ENCODE measurements at regions of chr3 and their contacts with region 1.

Region 1: GRCh38 chr3:159828542-159828943 is 160.1 kb upstream of the IL12A start:
- DNase-seq: peak; percentile 80
- H3K4me3 ChIP-seq: no peak overlapping the region
- H3K27ac ChIP-seq: peak overlapping the region; percentile 32
- H3K4me1 ChIP-seq: peaks cover 32% of the 10 kb centered on the region
- H3K27me3 ChIP-seq: no peaks in the 10 kb centered on the region
- CTCF ChIP-seq: peak; percentile 28 to 42
- POLR2A ChIP-seq: no peak

Region 2: GRCh38 chr3:159813822-159814523 is 14.6 kb before region 1 on chr3:
- CTCF ChIA-PET with region 1: interaction called, 10 read pairs
- POLR2A ChIA-PET with region 1: no interaction called
- dilution Hi-C with region 1: no loop called
- intact Hi-C with region 1: no loop called
- DNase-seq: no peak
- H3K4me3 ChIP-seq: no peak overlapping the region
- H3K27ac ChIP-seq: no peak overlapping the region
- H3K4me1 ChIP-seq: peaks cover 9% of the 10 kb centered on the region
- H3K27me3 ChIP-seq: no peaks in the 10 kb centered on the region
- CTCF ChIP-seq: no peak
- POLR2A ChIP-seq: no peak

Region 3: DNA sequence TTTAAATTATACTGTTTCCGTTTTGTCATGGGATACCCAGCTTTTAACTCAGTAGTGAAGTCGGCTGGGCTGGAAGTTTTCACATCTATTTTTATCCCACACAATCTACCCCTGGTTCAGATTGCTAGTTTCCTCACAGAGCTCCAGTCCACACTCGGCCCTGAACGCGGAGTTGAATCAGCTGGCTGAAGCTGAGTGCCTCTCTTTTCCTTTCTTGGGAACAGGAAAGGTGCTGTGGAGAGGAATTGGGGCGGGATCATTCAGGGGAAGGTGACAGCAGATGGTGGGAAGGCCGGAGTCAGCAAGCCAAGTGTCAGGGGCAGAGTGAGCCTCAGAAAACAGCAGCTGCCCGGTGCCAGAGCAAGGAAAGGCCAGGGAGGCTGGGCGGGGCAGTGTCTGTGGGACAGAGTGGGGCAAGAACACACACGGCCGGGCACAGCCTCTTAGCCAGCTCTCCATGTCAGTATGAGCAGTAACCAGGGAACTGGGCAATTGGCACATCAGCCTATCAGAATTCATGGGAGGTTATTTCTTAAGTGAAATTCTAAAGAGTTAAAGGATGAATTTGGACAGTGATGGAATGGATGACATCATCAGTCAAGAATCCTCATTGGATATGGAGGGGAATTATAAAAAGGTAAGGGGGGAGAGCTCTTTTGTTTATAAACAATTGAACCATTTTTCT is 24.4 kb after region 1 on chr3:
- CTCF ChIA-PET with region 1: interaction called, 145 read pairs
- POLR2A ChIA-PET with region 1: interaction called, 45 read pairs
- dilution Hi-C with region 1: no loop called
- intact Hi-C with region 1: loop called (anchors 1 kb)
- DNase-seq: peak; percentile 97
- H3K4me3 ChIP-seq: peak overlapping the region in 2 of 3 experiments; percentile 45 to 52
- H3K27ac ChIP-seq: peak overlapping the region; percentile 97
- H3K4me1 ChIP-seq: peaks cover 70% of the 10 kb centered on the region
- H3K27me3 ChIP-seq: no peaks in the 10 kb centered on the region
- CTCF ChIP-seq: no peak
- POLR2A ChIP-seq: peak; percentile 2

Region 4: GRCh38 chr3:159872374-159873109 is 44.0 kb after region 1 on chr3:
- CTCF ChIA-PET with region 1: interaction called, 32 read pairs
- POLR2A ChIA-PET with region 1: no interaction called
- dilution Hi-C with region 1: no loop called
- intact Hi-C with region 1: no loop called
- DNase-seq: peak; percentile 85
- H3K4me3 ChIP-seq: no peak overlapping the region
- H3K27ac ChIP-seq: peak overlapping the region; percentile 92
- H3K4me1 ChIP-seq: peaks cover 19% of the 10 kb centered on the region
- H3K27me3 ChIP-seq: no peaks in the 10 kb centered on the region
- CTCF ChIP-seq: peak; percentile 12 to 25
- POLR2A ChIP-seq: no peak

Region 5: GRCh38 chr3:159950156-159950898 is 121.8 kb after region 1 on chr3:
- CTCF ChIA-PET with region 1: no interaction called
- POLR2A ChIA-PET with region 1: no interaction called
- dilution Hi-C with region 1: no loop called
- intact Hi-C with region 1: no loop called
- DNase-seq: no peak
- H3K4me3 ChIP-seq: no peak overlapping the region
- H3K27ac ChIP-seq: no peak overlapping the region
- H3K4me1 ChIP-seq: no peaks in the 10 kb centered on the region
- H3K27me3 ChIP-seq: no peaks in the 10 kb centered on the region
- CTCF ChIP-seq: no peak
- POLR2A ChIP-seq: no peak

Region 6: DNA sequence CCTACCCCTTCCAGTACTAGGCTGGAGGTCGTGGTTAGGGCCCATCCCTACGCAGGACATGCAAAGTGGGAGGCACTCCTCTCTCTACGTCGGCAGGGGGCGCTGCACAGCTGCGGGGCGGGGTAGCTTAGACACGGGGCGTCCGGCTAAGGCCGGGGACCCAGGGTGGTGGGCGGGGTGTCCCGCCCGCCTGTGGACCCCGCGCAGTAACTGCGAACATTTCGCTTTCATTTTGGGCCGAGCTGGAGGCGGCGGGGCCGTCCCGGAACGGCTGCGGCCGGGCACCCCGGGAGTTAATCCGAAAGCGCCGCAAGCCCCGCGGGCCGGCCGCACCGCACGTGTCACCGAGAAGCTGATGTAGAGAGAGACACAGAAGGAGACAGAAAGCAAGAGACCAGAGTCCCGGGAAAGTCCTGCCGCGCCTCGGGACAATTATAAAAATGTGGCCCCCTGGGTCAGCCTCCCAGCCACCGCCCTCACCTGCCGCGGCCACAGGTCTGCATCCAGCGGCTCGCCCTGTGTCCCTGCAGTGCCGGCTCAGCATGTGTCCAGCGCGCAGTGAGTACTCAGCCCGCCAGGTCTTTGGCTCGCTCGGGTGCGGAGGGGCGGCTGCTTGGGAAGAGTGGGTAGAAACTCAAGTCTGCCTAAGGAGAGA is 160.2 kb after region 1 on chr3 and contains the start of gene IL12A:
- CTCF ChIA-PET with region 1: interaction called, 37 read pairs
- POLR2A ChIA-PET with region 1: no interaction called
- dilution Hi-C with region 1: no loop called
- intact Hi-C with region 1: loop called (anchors 5 kb)
- DNase-seq: peak; percentile 75
- H3K4me3 ChIP-seq: peak within 1 kb of the TSS; percentile 58 to 71 (median 60)
- H3K27ac ChIP-seq: no peak within 1 kb of the TSS
- H3K4me1 ChIP-seq: peaks cover 4% of the 10 kb centered on the region
- H3K27me3 ChIP-seq: no peaks in the 10 kb centered on the region
- CTCF ChIP-seq: peak; percentile 96 to 98
- POLR2A ChIP-seq: no peak
- total RNA-seq, gene IL12A: 1.5 and 1.7 TPM in 2 replicates

Measured in endothelial cell of umbilical vein (primary cell).